CD8-positive, alpha-beta T cell (primary cell): ENCODE measurements at regions of chr2 and their contacts with region 1.

Region 1: GRCh38 chr2:162521871-162522650 is 178.1 kb downstream of the GCA start:
- DNase-seq: no peak
- ATAC-seq: no peak
- H3K4me3 ChIP-seq: no peak overlapping the region
- H3K4me3 Mint-ChIP-seq: no peak overlapping the region
- H3K27ac ChIP-seq: no peak overlapping the region
- H3K27ac Mint-ChIP-seq: no peak overlapping the region
- H3K4me1 ChIP-seq: no peaks in the 10 kb centered on the region
- H3K4me1 Mint-ChIP-seq: no peaks in the 10 kb centered on the region
- H3K27me3 ChIP-seq: no peaks in the 10 kb centered on the region
- H3K27me3 Mint-ChIP-seq: no peaks in the 10 kb centered on the region
- CTCF ChIP-seq: no peak

Region 2: DNA sequence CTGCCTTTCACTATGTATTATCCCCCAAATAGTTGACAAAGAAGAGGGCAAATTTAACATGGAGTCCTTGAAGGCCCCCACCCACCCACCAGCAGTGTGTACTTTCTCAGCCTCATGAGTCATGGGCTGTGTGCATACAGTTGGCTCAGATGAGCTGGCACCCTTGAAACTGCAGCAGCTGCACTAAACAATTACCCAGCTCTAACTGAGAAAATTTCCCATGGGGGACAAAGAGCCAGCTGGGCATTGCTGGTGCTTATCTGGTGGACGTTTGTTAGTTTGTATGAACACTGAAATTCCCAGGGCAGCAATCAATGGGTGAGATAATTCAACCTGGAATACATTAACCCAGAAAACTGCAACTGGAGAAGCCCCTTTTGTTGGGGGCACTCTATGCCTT is 46.4 kb before region 1 on chr2:
- CTCF ChIA-PET with region 1: no interaction called
- POLR2A ChIA-PET with region 1: no interaction called
- intact Hi-C with region 1: loop called in 1 of 2 experiments (anchors 2 kb)
- DNase-seq: no peak
- ATAC-seq: no peak
- H3K4me3 ChIP-seq: no peak overlapping the region
- H3K4me3 Mint-ChIP-seq: no peak overlapping the region
- H3K27ac ChIP-seq: no peak overlapping the region
- H3K27ac Mint-ChIP-seq: no peak overlapping the region
- H3K4me1 ChIP-seq: no peaks in the 10 kb centered on the region
- H3K4me1 Mint-ChIP-seq: no peaks in the 10 kb centered on the region
- H3K27me3 ChIP-seq: no peaks in the 10 kb centered on the region
- H3K27me3 Mint-ChIP-seq: no peaks in the 10 kb centered on the region
- CTCF ChIP-seq: no peak